Lower leg skin (tissue), 4 donors: ENCODE measurements at regions of chr19 and their contacts with region 1.

Region 1: GRCh38 chr19:50933640-50934039 is 19.2 kb downstream of the KLK5 start:
- DNase-seq: peak in 1 of 2 donors; percentile 35
- H3K4me3 ChIP-seq: no peak overlapping the region
- CTCF ChIP-seq: no peak
- POLR2A ChIP-seq: no peak

Region 2: DNA sequence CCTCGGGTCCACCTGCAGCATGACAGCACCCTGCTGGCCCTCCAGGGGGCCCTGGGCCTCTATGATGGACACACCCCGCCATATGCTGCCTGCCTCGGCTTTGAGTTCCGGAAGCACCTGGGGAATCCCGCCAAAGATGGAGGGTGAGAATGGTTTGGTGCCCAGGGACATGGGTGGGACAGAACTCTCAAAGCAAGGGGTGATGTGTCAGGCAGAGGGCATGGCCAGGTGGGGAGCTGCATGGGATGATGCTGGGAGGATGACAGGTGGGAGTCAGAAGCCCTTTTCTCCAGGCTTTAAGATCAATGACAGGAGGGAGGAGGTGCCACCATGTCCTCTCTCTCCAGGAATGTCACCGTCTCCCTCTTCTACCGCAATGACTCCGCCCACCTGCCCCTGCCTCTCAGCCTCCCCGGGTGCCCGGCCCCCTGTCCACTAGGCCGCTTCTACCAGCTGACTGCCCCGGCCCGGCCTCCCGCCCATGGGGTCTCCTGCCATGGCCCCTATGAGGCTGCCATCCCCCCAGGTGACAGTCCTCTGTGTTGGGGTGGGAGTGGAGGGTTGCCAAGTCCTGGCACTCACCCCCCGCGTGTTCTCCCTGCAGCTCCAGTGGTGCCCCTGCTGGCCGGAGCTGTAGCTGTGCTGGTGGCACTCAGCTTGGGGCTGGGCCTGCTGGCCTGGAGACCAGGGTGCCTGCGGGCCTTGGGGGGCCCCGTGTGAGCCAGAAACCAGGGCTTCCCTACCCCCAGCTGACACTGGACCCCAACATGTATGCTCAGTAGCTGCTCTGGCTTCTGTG is 139.0 kb before region 1 on chr19:
- intact Hi-C with region 1: no loop called
- DNase-seq: no peak
- H3K4me3 ChIP-seq: no peak overlapping the region
- CTCF ChIP-seq: no peak
- POLR2A ChIP-seq: no peak

Region 3: GRCh38 chr19:51010066-51010795 is 76.6 kb after region 1 on chr19:
- intact Hi-C with region 1: loop called (anchors 5 kb)
- DNase-seq: no peak
- H3K4me3 ChIP-seq: no peak overlapping the region
- CTCF ChIP-seq: no peak
- POLR2A ChIP-seq: no peak

Region 4: GRCh38 chr19:51097166-51097738 is 163.6 kb after region 1 on chr19:
- intact Hi-C with region 1: loop called (anchors 2 kb)
- DNase-seq: peak in 1 of 2 donors; percentile 41
- H3K4me3 ChIP-seq: no peak overlapping the region
- CTCF ChIP-seq: no peak
- POLR2A ChIP-seq: no peak